Activated naive CD4-positive, alpha-beta T cell treated with anti-CD3 and anti-CD28 coated beads for 36 hours (primary cell): ENCODE measurements at regions of chr3 and their contacts with region 1.

Region 1: GRCh38 chr3:32992322-32992692 is 40.9 kb downstream of the CCR4 start:
- DNase-seq: no peak
- H3K4me3 Mint-ChIP-seq: peak overlapping the region; percentile 31
- H3K27ac Mint-ChIP-seq: peak overlapping the region; percentile 84
- H3K4me1 Mint-ChIP-seq: peaks cover 54% of the 10 kb centered on the region
- H3K27me3 Mint-ChIP-seq: peaks cover 2% of the 10 kb centered on the region

Region 2: DNA sequence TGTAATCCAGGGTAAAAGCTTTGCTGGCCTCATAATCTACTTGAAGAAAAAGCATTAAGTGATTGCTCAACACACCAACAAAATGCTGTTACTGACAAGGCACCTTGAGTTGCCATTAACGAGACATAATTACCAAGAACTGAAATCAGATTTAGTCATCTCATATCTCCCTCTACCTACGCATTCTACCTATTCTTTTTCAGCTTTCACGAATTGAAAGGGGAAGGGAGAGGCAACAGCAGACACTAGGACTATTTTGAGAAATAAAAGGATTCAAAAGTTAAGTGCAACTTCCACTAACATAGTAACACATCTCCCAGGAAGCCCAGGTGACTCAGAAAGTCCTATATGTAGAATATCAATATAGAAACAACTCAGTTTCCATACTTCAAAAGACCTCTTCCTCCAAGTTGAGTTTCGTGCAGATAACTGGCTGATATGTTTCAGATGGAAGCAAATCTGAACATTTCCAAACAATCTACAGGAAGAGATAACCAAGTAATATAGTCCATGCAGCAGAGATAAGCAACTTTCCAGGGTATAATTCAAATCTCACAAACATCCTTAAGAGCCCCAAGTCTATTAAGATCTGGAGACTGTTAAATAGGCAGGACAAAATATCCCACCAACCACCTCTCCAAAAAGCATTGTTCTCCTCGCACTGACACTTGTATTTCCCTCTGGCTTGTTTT is 1013.2 kb before region 1 on chr3:
- CTCF ChIA-PET with region 1: no interaction called
- intact Hi-C with region 1: loop called (anchors 1 kb)
- DNase-seq: peak; percentile 37
- H3K4me3 Mint-ChIP-seq: peak overlapping the region; percentile 78
- H3K27ac Mint-ChIP-seq: peak overlapping the region; percentile 43
- H3K4me1 Mint-ChIP-seq: peaks cover 26% of the 10 kb centered on the region
- H3K27me3 Mint-ChIP-seq: peaks cover 49% of the 10 kb centered on the region

Region 3: DNA sequence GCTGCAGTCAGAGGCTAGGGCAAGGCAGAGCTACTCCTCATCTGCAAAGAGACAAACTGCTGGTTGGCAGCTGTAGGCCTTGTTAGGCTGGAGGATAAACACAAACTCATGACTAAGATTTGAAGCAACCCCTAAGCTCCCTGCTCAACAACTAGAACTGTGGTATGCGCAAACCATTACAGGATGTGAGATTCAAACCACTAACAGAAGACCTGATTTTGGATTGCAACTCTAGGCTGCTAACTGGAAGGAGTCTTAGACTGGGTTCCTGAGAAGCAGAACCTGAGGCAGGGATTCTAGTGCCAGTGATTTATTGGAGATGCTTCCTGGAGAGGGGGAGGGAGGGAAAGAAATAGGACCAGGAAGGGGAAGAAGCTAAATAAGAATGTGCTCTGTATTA is 18.3 kb before region 1 on chr3:
- CTCF ChIA-PET with region 1: no interaction called
- intact Hi-C with region 1: loop called (anchors 1 kb)
- DNase-seq: peak; percentile 49
- H3K4me3 Mint-ChIP-seq: no peak overlapping the region
- H3K27ac Mint-ChIP-seq: no peak overlapping the region
- H3K4me1 Mint-ChIP-seq: peaks cover 10% of the 10 kb centered on the region
- H3K27me3 Mint-ChIP-seq: no peaks in the 10 kb centered on the region

Region 4: GRCh38 chr3:33023172-33024136 is 31.1 kb after region 1 on chr3:
- CTCF ChIA-PET with region 1: interaction called, 3 read pairs
- intact Hi-C with region 1: loop called (anchors 1 kb)
- DNase-seq: no peak
- H3K4me3 Mint-ChIP-seq: peak overlapping the region; percentile 32
- H3K27ac Mint-ChIP-seq: peak overlapping the region; percentile 81
- H3K4me1 Mint-ChIP-seq: peaks cover 46% of the 10 kb centered on the region
- H3K27me3 Mint-ChIP-seq: no peaks in the 10 kb centered on the region

Region 5: GRCh38 chr3:33047842-33048834 is 55.8 kb after region 1 on chr3:
- CTCF ChIA-PET with region 1: interaction called, 3 read pairs
- intact Hi-C with region 1: loop called (anchors 1 kb)
- DNase-seq: peak; percentile 78
- H3K4me3 Mint-ChIP-seq: no peak overlapping the region
- H3K27ac Mint-ChIP-seq: peak overlapping the region; percentile 89
- H3K4me1 Mint-ChIP-seq: peaks cover 62% of the 10 kb centered on the region
- H3K27me3 Mint-ChIP-seq: no peaks in the 10 kb centered on the region

Region 6: DNA sequence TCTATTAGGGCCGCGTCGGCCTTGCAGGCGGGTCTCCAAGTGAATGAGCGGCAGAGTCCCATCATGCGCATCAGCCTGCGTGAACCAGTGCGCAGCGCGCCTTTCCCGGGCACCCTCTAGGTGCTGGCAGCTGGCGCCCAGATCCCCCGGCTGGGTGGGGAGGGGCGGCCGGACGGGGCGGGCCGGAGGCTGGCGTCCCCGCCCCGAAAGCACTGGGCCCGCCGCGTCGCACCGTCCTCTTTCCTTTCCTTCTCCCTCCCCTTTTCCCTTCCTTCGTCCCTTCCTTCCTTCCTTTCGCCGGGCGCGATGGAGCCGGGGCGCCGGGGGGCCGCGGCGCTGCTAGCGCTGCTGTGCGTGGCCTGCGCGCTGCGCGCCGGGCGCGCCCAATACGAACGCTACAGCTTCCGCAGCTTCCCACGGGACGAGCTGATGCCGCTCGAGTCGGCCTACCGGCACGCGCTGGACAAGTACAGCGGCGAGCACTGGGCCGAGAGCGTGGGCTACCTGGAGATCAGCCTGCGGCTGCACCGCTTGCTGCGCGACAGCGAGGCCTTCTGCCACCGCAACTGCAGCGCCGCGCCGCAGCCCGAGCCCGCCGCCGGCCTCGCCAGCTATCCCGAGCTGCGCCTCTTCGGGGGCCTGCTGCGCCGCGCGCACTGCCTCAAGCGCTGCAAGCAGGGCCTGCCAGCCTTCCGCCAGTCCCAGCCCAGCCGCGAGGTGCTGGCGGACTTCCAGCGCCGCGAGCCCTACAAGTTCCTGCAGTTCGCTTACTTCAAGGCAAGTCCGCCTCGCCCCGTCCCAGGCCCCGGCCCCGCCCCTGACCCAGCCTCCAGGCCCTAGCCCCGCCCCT is 121.7 kb after region 1 on chr3 and contains the start of gene CRTAP:
- CTCF ChIA-PET with region 1: no interaction called
- intact Hi-C with region 1: loop called (anchors 1 kb)
- DNase-seq: peak; percentile 86
- H3K4me3 Mint-ChIP-seq: peak within 1 kb of the TSS; percentile 78
- H3K27ac Mint-ChIP-seq: no peak within 1 kb of the TSS
- H3K4me1 Mint-ChIP-seq: peaks cover 36% of the 10 kb centered on the region
- H3K27me3 Mint-ChIP-seq: no peaks in the 10 kb centered on the region
- total RNA-seq, gene CRTAP: 48.1 to 51.1 TPM